Endothelial cell of umbilical vein (primary cell): ENCODE measurements at regions of chr13 and their contacts with region 1.

Region 1: DNA sequence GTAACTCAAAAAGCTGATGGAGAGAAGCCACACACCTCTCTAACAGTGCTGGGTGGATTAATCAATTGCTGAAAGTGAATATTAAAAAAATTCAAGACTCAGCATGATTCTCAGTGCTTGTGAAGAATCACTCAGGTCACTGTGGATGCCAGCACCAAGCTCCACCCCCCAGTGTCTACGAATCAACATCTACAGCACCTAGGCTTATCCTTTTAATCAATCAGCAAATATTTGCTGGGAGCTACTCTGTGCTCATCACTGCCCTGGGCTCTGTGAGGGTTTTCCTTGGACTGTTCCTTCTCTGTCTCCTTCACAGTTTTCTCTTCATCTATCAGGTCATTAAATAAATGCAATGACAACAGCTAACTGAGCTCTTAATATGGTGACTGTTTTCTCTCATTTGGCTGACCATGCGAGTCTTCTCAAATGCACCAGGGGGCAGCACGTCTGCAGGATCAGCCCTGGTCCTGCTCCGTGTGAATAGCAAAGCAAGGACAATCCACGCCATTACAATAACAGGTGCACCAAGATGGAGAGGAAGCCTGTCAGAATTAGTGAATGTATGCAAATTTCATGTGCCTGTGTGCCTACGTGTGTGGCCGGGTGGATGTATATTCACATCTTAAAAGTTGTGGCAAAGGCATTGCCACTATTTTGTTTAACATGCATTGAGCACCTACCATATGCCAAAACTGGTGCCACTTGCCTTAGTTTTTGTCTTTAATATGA is 14.6 kb upstream of the C13orf42 start:
- DNase-seq: peak; percentile 60
- H3K4me3 ChIP-seq: no peak overlapping the region
- H3K27ac ChIP-seq: no peak overlapping the region
- H3K4me1 ChIP-seq: no peaks in the 10 kb centered on the region
- H3K27me3 ChIP-seq: peaks cover 4 to 15% of the 10 kb centered on the region in 2 experiments
- CTCF ChIP-seq: peak; percentile 82 to 88
- POLR2A ChIP-seq: no peak

Region 2: DNA sequence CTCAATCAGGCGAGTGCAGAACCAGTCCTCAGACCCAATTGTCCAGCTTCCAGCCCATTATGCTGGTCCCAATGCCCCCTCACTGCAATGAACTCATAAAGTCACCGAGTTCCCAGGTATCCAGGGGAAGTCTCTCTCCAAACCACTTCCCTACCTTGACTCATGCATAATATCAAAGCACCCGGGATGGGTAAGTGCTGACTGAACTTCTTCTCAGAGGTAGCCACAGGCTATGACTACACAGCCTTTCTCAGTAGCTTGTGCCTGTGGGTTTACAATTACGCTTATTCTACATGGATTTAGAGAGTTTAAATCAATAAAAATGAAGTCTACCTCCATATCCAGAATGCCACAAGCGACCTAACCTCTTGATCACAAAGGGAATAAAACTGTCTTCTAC is 12.9 kb before region 1 on chr13:
- CTCF ChIA-PET with region 1: interaction called, 38 read pairs
- POLR2A ChIA-PET with region 1: no interaction called
- dilution Hi-C with region 1: no loop called
- intact Hi-C with region 1: no loop called
- DNase-seq: no peak
- H3K4me3 ChIP-seq: no peak overlapping the region
- H3K27ac ChIP-seq: no peak overlapping the region
- H3K4me1 ChIP-seq: no peaks in the 10 kb centered on the region
- H3K27me3 ChIP-seq: peaks cover 0 to 5% of the 10 kb centered on the region in 2 experiments
- CTCF ChIP-seq: no peak
- POLR2A ChIP-seq: no peak

Region 3: GRCh38 chr13:51148952-51149573 is 23.4 kb after region 1 on chr13:
- CTCF ChIA-PET with region 1: interaction called, 73 read pairs
- POLR2A ChIA-PET with region 1: no interaction called
- dilution Hi-C with region 1: no loop called
- intact Hi-C with region 1: loop called (anchors 1 kb)
- DNase-seq: peak; percentile 78
- H3K4me3 ChIP-seq: no peak overlapping the region
- H3K27ac ChIP-seq: no peak overlapping the region
- H3K4me1 ChIP-seq: peaks cover 11% of the 10 kb centered on the region
- H3K27me3 ChIP-seq: no peaks in the 10 kb centered on the region
- CTCF ChIP-seq: peak; percentile 60 to 68
- POLR2A ChIP-seq: no peak

Region 4: GRCh38 chr13:51158880-51159518 is 33.3 kb after region 1 on chr13:
- CTCF ChIA-PET with region 1: interaction called, 73 read pairs
- POLR2A ChIA-PET with region 1: no interaction called
- dilution Hi-C with region 1: no loop called
- intact Hi-C with region 1: no loop called
- DNase-seq: peak; percentile 9
- H3K4me3 ChIP-seq: no peak overlapping the region
- H3K27ac ChIP-seq: no peak overlapping the region
- H3K4me1 ChIP-seq: peaks cover 7% of the 10 kb centered on the region
- H3K27me3 ChIP-seq: no peaks in the 10 kb centered on the region
- CTCF ChIP-seq: no peak
- POLR2A ChIP-seq: no peak

Region 5: GRCh38 chr13:51222037-51222685 is 96.5 kb after region 1 on chr13 and contains the start of gene FAM124A:
- CTCF ChIA-PET with region 1: interaction called, 11 read pairs
- POLR2A ChIA-PET with region 1: no interaction called
- dilution Hi-C with region 1: no loop called
- intact Hi-C with region 1: no loop called
- DNase-seq: peak; percentile 36
- H3K4me3 ChIP-seq: peak within 1 kb of the TSS; percentile 29 to 64 (median 46)
- H3K27ac ChIP-seq: no peak within 1 kb of the TSS
- H3K4me1 ChIP-seq: peaks cover 7% of the 10 kb centered on the region
- H3K27me3 ChIP-seq: no peaks in the 10 kb centered on the region
- CTCF ChIP-seq: peak in 1 of 2 donors; percentile 37
- POLR2A ChIP-seq: peak; percentile 32
- total RNA-seq, gene FAM124A: 7.4 and 9.9 TPM in 2 replicates

Region 6: DNA sequence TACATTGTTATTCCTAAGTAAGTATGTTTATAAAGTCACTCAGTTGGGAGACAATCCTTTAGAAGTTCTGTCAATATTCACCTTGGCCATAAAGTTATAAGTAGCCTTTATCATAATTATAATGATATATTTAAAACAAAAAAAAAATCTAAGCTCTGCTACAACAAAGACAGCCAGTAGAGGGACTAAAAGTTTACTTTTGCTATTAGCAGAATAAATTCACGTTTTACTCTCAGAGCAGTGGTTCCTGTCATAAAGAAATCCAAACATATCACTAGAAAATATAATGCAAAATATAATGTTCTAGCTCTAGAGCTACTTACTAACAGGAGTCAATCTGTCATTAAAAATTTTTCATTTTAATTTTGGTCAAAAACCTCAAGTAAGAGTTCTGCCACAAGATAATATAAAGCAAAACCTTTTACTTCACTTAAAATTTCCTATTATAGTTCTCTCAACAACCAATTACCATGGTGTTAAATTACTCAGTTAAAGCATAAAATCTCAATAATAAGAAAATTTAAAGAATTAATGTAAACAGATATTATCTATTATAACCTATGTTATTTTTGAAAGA is 309.4 kb after region 1 on chr13:
- CTCF ChIA-PET with region 1: interaction called, 11 read pairs
- POLR2A ChIA-PET with region 1: no interaction called
- dilution Hi-C with region 1: no loop called
- intact Hi-C with region 1: no loop called
- DNase-seq: peak; percentile 49
- H3K4me3 ChIP-seq: no peak overlapping the region
- H3K27ac ChIP-seq: no peak overlapping the region
- H3K4me1 ChIP-seq: no peaks in the 10 kb centered on the region
- H3K27me3 ChIP-seq: no peaks in the 10 kb centered on the region
- CTCF ChIP-seq: peak; percentile 19
- POLR2A ChIP-seq: no peak

Region 7: DNA sequence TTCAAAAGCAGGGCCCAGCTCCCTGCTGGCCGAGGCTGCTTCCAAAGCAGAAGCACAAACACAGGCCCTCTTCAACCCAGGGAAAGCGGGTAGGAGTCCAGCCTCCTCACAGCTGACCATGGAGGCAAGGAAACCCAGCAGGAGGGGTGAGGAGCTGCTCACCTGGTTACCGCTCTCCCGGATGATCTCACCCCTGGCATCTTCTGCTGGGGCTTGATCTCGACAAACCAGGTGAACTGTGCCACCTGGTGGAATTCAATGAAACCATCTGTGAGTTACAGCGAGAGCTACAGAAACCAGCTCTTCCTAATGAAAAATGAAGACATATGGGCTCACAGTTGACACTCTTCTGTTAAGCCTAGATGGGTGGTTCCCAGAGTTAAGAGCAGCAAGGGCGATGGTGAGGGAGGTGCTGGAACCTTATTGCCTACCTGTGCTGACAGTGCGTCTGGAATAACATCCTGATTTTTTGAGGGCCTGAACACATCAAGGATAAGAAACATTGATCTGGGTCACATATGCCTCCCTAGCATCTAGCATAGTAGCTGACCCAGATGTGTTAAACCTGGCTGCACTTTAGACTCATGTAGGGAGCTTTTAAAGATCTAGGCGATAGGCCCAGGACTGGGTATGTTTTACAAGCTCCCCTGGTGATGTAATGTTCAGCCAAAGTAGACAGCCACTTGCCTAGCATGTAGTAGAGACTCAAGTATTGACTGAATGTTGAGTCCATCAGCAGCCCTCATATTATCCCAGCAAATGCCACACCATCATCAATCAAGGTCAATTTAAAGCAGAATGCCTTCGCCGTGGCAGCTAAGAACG is 672.2 kb after region 1 on chr13:
- CTCF ChIA-PET with region 1: interaction called, 60 read pairs
- POLR2A ChIA-PET with region 1: no interaction called
- dilution Hi-C with region 1: no loop called
- intact Hi-C with region 1: loop called (anchors 1 kb)
- DNase-seq: peak; percentile 36
- H3K4me3 ChIP-seq: no peak overlapping the region
- H3K27ac ChIP-seq: no peak overlapping the region
- H3K4me1 ChIP-seq: peaks cover 24% of the 10 kb centered on the region
- H3K27me3 ChIP-seq: no peaks in the 10 kb centered on the region
- CTCF ChIP-seq: peak; percentile 16 to 27
- POLR2A ChIP-seq: no peak